Heart right ventricle (tissue), 16 donors: ENCODE measurements at regions of chr6 and their contacts with region 1.

Region 1: DNA sequence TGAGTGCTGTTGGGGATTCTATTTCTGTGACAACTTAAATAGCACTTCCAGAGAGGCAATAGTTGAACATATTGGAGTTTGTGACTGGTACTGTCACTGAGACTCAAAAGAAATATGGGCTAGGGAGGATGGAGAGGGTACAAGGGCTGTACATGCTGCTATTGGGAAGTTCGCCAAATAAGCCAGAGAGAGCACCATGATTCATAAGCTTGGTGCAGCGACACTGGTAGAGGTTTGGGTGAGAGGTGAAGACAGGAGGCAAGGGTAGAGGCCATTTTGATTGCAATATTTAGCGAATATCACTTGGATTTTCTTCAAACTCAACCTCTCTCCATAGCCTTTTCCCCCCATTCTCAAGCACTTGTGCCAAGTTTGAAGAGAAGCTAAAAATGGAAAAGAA is 214.3 kb downstream of the OGFRL1 start:
- DNase-seq: no peak
- ATAC-seq: no peak
- H3K4me3 ChIP-seq: no peak overlapping the region
- H3K27ac ChIP-seq: no peak overlapping the region
- H3K4me1 ChIP-seq: no peaks in the 10 kb centered on the region
- H3K27me3 ChIP-seq: no peaks in the 10 kb centered on the region
- CTCF ChIP-seq: no peak

Region 2: DNA sequence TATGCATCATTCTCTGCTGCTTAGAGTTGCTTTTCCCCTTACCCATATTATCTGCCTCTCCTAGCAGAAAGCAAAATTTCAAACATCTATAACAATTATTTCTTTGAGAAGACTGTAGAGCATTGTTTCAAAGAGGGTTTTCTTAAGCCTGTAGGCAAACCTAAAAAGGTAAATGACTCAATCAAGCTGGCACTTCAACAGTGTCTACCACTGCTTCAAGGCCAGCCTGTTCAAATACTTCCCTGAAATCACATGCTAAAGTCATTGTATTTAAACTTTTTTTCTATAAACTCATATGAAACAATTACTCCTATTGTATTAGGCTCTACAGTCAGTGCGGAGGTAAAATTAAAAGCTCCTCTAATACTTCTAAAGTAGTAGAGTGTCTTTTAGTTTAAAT is 127.3 kb before region 1 on chr6:
- intact Hi-C with region 1: loop called in 2 of 10 experiments (anchors 5 to 10 kb)
- DNase-seq: no peak
- ATAC-seq: peak in 5 of 8 donors; percentile 25 to 69 (median 51)
- H3K4me3 ChIP-seq: no peak overlapping the region
- H3K27ac ChIP-seq: peak overlapping the region in 1 of 10 donors; percentile 36
- H3K4me1 ChIP-seq: peaks cover 0 to 34% (median 9%) of the 10 kb centered on the region in 9 donors
- H3K27me3 ChIP-seq: no peaks in the 10 kb centered on the region
- CTCF ChIP-seq: no peak

Region 3: DNA sequence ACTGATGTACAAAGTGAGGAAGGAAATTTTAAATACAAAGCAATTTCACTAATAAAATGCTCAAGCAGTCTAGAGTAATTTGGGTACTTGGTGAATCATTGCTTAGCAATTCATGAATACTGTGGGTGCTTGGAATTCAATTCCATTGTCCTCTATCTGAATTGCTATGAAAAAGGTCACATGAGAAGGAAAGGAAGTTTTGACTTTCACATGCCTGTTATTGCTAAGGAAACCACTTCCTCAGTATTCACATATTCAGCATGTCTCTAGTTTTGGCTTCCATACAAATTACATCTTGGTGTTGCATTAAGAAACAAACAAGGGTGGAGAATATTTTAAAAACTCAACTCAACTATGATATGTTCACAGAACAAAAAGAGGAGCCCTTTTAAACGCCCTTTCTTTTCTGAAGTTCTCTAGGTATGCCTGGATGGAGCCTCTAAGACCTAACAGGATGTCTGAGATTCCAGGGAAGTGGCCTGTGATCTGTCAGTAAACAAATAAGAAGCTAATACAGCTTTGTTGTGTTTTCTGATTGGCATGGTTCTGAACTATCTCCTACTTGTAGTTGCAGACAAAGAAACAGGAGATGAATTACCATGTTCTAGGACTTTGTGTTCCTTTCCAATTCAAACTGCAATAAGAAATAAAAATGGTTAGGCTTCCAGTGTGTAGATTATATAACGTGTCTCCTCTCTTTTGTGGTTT is 24.0 kb before region 1 on chr6:
- intact Hi-C with region 1: no loop called
- DNase-seq: no peak
- ATAC-seq: peak; percentile 48 to 86 (median 78)
- H3K4me3 ChIP-seq: no peak overlapping the region
- H3K27ac ChIP-seq: peak overlapping the region in 9 of 10 donors; percentile 10 to 81 (median 70)
- H3K4me1 ChIP-seq: peaks cover 0 to 62% (median 45%) of the 10 kb centered on the region in 9 donors
- H3K27me3 ChIP-seq: no peaks in the 10 kb centered on the region
- CTCF ChIP-seq: no peak